Natural killer cell (primary cell): ENCODE measurements at regions of chr12 and their contacts with region 1.

Region 1: DNA sequence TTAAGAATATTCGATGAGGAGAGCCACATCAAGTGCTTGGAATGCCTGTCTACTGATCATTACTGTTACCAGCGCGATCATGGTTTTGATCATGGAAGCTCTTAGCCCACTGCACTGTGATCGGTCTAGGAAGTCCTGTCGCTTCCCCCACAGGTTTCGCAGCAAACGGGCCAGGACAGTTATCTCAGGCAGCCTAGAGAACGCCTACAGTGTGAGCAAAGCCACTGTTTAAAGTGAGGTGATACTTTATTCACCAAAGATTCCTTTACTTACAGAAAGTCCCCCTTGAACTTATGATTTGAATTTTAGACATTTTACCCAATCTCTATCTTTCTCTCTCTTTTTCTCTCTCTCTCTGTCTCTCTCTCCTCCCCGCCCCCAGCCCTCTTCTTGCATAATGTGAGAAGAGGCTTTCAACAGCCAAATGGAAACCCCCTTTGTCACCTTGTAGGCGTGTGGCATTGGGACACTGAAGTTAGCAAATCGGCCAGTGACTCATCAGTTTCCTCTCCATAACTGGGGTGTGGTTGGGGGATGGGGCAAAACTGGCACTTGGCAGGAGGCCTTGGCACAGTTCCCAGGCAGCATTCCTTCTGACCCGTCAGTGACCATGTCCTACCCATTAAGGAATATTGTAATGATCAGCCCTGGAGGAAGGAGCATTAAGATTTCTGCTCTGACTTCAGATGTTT is 214.8 kb downstream of the CHST11 start:
- DNase-seq: peak; percentile 72 to 88
- ATAC-seq: peak; percentile 90 to 92 (median 91)
- H3K4me3 ChIP-seq: no peak overlapping the region
- H3K4me3 Mint-ChIP-seq: peak overlapping the region; percentile 87
- H3K27ac ChIP-seq: peak overlapping the region; percentile 56
- H3K27ac Mint-ChIP-seq: peak overlapping the region; percentile 85 to 93
- H3K4me1 ChIP-seq: peaks cover 55% of the 10 kb centered on the region
- H3K4me1 Mint-ChIP-seq: peaks cover 55 to 56% of the 10 kb centered on the region in 2 donors
- H3K27me3 ChIP-seq: no peaks in the 10 kb centered on the region
- H3K27me3 Mint-ChIP-seq: no peaks in the 10 kb centered on the region
- CTCF ChIP-seq: no peak

Region 2: DNA sequence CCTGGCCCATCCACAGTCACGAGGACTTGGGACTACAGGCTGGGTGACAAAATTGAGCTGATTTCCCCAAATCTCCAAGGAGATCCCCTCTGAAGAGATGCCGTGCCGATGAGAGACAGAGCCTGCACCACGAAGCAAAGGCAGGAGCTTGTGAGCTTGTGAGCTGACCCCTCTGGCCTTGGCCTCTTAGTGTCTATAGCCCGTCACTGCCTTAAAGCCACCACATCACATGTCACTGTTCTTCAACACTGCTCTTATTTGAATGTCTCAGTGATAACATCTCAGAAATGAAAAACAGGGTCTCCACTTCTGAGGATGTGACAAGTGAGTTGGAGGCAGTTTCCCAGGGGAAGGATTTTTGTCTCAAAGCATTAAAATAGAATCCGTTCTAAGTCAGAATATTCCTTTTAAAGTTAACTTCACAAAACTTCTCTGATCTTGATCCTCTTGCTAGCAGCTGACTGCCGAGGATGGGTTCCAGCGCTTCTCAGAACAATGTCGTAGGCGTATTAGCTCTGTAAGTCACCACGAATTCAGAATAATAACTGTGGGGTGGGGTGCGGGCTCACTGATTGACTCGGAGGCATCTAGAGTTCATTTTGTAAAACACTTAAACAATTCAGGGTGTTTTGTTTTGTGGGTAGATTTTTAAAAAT is 177.3 kb before region 1 on chr12:
- intact Hi-C with region 1: no loop called
- DNase-seq: peak in 1 of 2 donors; percentile 58
- ATAC-seq: peak; percentile 56 to 62 (median 58)
- H3K4me3 ChIP-seq: peak overlapping the region; percentile 5
- H3K4me3 Mint-ChIP-seq: peak overlapping the region; percentile 54
- H3K27ac ChIP-seq: peak overlapping the region; percentile 71
- H3K27ac Mint-ChIP-seq: peak overlapping the region; percentile 91 to 94
- H3K4me1 ChIP-seq: peaks cover 64% of the 10 kb centered on the region
- H3K4me1 Mint-ChIP-seq: peaks cover 83 to 84% of the 10 kb centered on the region in 2 donors
- H3K27me3 ChIP-seq: no peaks in the 10 kb centered on the region
- H3K27me3 Mint-ChIP-seq: no peaks in the 10 kb centered on the region
- CTCF ChIP-seq: no peak

Region 3: DNA sequence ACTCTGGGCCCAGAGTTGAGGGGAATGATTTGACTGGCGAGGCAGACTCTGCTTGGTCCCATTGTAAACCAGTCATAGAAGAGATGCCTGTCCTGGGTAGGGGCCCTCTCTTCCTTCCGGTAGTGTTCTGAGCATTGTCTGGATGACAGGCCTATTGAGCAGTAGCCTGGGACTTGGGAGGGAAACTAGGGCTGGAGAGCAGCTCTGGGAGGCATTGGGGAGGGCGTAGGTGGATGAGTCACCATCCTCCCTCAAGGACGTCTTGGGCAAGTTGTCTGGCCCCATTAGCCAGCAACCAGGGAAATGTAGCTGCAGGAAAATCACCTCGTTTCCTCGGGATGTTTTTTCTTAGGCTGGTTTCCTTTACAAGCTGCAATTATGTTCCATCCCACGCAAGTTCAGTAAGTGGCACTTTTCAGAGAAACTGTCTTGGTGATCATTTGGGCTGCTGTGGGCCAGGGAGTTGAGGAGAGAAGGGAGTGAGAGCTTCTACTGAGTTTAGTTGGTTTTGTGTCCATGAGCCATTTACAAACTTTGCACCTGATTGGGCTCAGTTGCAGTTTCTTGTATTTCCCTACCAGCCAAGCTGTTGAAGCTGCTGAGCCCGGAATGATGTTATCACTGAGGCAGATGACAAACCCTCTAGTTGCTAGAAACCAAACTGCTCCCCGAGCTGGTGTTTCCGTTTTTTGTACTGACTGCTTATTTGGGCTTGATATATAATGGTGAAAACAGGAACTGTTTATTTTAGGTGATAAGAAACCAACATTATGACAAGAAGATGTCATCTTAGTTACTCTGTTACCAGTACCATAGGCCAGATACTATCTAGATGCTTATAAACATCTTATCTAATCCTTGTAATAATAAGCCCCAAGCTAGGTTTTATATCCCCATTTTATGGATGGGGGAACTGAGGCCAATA is 67.2 kb before region 1 on chr12:
- intact Hi-C with region 1: loop called (anchors 2 kb)
- DNase-seq: peak; percentile 28 to 64
- ATAC-seq: peak; percentile 82 to 89 (median 86)
- H3K4me3 ChIP-seq: no peak overlapping the region
- H3K4me3 Mint-ChIP-seq: peak overlapping the region; percentile 76
- H3K27ac ChIP-seq: peak overlapping the region; percentile 35
- H3K27ac Mint-ChIP-seq: peak overlapping the region; percentile 92
- H3K4me1 ChIP-seq: peaks cover 26% of the 10 kb centered on the region
- H3K4me1 Mint-ChIP-seq: peaks cover 80 to 82% of the 10 kb centered on the region in 2 donors
- H3K27me3 ChIP-seq: no peaks in the 10 kb centered on the region
- H3K27me3 Mint-ChIP-seq: no peaks in the 10 kb centered on the region
- CTCF ChIP-seq: no peak

Region 4: DNA sequence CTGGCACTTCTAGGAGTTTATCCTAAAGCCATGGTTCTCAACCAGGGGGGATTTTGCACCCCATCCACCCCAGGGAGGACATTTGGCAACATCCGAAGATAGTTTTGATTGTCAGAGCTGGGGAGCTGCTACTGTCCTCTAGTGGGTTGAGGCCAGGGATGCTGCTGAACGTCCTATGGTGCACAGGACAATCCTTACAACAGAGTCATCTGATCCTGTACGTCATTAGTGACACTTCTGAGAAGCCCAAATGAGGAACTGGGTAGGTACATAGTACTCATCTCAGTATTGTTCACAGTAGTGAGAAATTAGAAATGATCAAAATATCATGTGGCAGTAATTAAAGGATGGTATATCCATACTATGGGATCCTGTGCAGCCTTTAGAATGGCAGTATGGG is 29.7 kb before region 1 on chr12:
- intact Hi-C with region 1: no loop called
- DNase-seq: peak in 1 of 2 donors; percentile 15
- ATAC-seq: peak; percentile 44 to 84 (median 49)
- H3K4me3 ChIP-seq: no peak overlapping the region
- H3K4me3 Mint-ChIP-seq: no peak overlapping the region
- H3K27ac ChIP-seq: peak overlapping the region; percentile 13
- H3K27ac Mint-ChIP-seq: peak overlapping the region; percentile 8 to 23
- H3K4me1 ChIP-seq: peaks cover 36% of the 10 kb centered on the region
- H3K4me1 Mint-ChIP-seq: peaks cover 69 to 72% of the 10 kb centered on the region in 2 donors
- H3K27me3 ChIP-seq: no peaks in the 10 kb centered on the region
- H3K27me3 Mint-ChIP-seq: no peaks in the 10 kb centered on the region
- CTCF ChIP-seq: no peak

Region 5: DNA sequence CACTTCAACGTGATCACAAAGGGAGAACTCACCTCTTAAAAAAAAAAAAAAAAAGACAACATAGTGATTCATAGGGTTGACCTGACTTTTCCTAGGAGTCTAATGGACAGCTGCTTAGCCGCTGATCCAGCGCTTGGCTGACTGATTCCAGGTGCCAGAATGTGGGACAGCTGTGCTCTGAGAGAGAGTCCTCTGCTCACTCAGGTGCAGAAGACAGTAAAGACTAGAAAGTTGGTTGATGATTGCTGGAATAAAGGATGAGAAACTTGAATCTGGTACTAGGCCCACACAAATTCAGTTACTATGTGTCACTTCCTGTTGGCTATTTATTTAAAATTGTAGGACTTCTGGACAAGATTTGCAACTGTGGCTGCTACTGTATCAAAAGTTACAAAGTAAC is 14.6 kb after region 1 on chr12:
- intact Hi-C with region 1: loop called (anchors 1 kb)
- DNase-seq: no peak
- ATAC-seq: no peak
- H3K4me3 ChIP-seq: no peak overlapping the region
- H3K4me3 Mint-ChIP-seq: peak overlapping the region; percentile 53
- H3K27ac ChIP-seq: no peak overlapping the region
- H3K27ac Mint-ChIP-seq: peak overlapping the region; percentile 93
- H3K4me1 ChIP-seq: peaks cover 86% of the 10 kb centered on the region
- H3K4me1 Mint-ChIP-seq: peaks cover 89 to 94% of the 10 kb centered on the region in 2 donors
- H3K27me3 ChIP-seq: no peaks in the 10 kb centered on the region
- H3K27me3 Mint-ChIP-seq: no peaks in the 10 kb centered on the region
- CTCF ChIP-seq: no peak

Region 6: DNA sequence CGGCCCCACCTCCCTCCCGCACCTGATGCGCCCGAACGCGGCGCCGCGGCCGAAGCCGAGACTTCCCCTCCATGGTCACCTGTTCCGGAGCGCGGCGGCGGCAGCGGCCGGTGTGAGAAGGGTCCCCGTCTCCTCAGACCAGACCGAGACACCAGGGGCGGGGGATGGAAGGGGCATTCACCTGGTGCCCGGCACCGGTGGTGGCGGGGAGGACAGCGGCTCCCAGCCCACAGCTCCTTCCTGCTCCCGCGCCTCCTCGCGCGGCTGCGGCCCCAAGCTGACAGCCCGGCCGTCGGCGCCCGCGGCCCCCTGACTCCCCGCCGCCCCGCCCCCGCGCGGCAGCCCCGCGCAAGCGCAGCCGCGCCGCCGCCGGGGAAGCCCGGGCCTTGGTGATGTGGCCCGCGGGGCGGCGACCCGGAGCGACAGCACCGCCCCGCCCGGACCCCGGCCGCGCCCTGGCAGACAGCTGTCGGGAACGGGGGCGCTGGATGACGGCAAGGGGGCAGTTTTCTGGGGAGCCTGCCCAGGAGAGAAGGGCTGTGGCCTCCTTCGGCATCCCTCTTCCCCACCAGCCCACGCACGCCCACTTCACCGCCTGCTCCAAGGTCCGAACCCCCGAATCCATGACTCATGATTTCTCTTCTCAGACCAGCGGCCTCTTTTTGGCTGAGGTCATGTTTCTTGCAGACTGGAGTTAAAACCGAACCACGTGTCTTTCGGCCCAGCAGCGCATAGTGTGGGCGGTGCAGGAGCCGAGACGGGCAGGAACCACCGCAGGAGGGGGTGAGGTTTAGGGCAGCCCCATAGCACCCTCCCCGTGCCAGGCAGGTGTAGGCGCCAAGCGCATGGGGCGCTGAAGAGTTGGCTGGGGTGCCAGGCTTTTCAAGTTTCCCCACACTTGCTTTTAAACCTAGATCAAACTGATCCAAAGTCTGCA is 286.7 kb after region 1 on chr12 and contains the start of gene SLC41A2:
- intact Hi-C with region 1: loop called (anchors 5 kb)
- DNase-seq: peak; percentile 79 to 88
- ATAC-seq: peak; percentile 83 to 94 (median 89)
- H3K4me3 ChIP-seq: peak within 1 kb of the TSS; percentile 70
- H3K4me3 Mint-ChIP-seq: peak within 1 kb of the TSS; percentile 92
- H3K27ac ChIP-seq: peak within 1 kb of the TSS; percentile 55
- H3K27ac Mint-ChIP-seq: peak within 1 kb of the TSS; percentile 79 to 93
- H3K4me1 ChIP-seq: peaks cover 13% of the 10 kb centered on the region
- H3K4me1 Mint-ChIP-seq: peaks cover 12 to 19% of the 10 kb centered on the region in 2 donors
- H3K27me3 ChIP-seq: peaks cover 7% of the 10 kb centered on the region
- H3K27me3 Mint-ChIP-seq: peaks cover 19 to 27% of the 10 kb centered on the region in 2 donors
- CTCF ChIP-seq: no peak
- total RNA-seq, gene SLC41A2: 1.3 to 3.5 (median 1.7) TPM